Psoas muscle (tissue), 8 donors: ENCODE measurements at regions of chr10 and their contacts with region 1.

Region 1: GRCh38 chr10:122267849-122268737 is 3.0 kb upstream of the BTBD16 start:
- DNase-seq: peak in 1 of 2 donors; percentile 40
- ATAC-seq: peak; percentile 63 to 85 (median 82)
- H3K4me3 ChIP-seq: no peak overlapping the region
- H3K27ac ChIP-seq: peak overlapping the region; percentile 30
- H3K4me1 ChIP-seq: peaks cover 9% of the 10 kb centered on the region
- H3K27me3 ChIP-seq: no peaks in the 10 kb centered on the region
- CTCF ChIP-seq: peak; percentile 79

Region 2: DNA sequence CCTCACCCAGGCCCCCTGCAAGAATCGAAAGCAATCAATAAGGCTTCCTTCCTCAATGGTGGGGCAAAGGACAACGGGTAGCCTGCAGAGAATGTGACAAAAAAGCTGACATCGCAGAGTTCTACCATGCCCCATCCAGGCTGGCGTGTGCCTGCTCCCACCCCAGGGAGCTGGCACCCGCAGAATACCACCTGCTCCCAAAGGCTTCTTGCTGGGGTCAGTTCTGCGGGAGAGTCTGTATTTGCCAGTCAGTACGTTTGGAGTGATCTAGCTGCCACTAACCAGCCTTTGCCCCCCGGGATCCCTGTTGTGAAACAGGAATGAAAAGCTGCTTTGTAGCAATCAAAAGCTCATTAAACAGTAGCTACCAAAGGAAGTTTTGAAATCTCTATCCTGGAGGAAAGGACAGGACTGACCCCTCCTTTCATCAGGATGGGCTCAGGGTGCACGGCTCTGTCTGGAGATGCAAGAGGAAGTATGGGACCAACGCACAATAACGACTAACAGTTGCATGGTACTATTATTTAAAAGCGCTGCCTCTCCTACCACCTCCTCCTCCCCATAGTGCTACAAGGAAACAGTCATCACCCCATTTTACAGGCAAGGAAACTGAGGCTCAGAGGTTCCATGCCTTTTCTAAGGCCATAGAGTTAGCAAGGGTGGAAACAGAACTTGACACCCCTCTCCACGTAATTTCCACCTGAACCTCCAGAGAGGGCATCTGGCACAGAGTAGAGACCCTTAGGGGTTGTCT is 736.8 kb before region 1 on chr10:
- intact Hi-C with region 1: loop called in 1 of 2 experiments (anchors 5 kb)
- DNase-seq: no peak
- ATAC-seq: no peak
- H3K4me3 ChIP-seq: no peak overlapping the region
- H3K27ac ChIP-seq: no peak overlapping the region
- H3K4me1 ChIP-seq: no peaks in the 10 kb centered on the region
- H3K27me3 ChIP-seq: peaks cover 0 to 14% (median 2%) of the 10 kb centered on the region in 3 donors
- CTCF ChIP-seq: no peak

Region 3: DNA sequence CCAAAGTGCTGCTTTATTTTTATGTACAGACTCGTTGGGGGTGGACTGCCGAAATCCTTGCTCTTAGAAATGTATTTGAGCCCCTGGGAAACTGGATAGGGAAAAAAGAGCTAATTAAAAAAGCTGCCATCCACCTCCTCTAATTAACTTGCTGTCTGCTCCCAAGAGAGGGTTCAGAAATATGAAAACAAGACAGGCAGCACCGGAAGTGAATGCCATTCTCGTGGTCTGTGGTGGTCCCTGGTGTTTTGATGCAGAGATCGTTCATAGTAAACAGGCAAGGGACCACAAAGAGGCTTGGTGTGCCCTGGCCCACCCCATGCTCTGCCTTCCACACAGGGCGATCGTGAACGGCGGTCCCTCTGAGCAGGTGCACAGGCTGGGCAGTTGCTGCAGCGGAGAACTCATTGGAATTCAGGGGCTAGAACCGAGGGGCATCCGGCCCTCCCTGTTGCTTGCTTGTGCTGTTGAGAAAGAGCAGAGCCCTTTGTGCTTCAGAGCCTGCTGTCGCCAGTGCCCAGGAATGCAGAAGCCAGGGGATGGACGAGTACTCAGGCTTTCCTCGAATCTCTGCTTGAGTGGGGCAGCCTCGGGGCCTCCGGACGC is 76.1 kb before region 1 on chr10:
- intact Hi-C with region 1: no loop called
- DNase-seq: no peak
- ATAC-seq: peak in 3 of 4 donors; percentile 7 to 43 (median 8)
- H3K4me3 ChIP-seq: no peak overlapping the region
- H3K27ac ChIP-seq: no peak overlapping the region
- H3K4me1 ChIP-seq: peaks cover 36% of the 10 kb centered on the region
- H3K27me3 ChIP-seq: no peaks in the 10 kb centered on the region
- CTCF ChIP-seq: no peak

Region 4: DNA sequence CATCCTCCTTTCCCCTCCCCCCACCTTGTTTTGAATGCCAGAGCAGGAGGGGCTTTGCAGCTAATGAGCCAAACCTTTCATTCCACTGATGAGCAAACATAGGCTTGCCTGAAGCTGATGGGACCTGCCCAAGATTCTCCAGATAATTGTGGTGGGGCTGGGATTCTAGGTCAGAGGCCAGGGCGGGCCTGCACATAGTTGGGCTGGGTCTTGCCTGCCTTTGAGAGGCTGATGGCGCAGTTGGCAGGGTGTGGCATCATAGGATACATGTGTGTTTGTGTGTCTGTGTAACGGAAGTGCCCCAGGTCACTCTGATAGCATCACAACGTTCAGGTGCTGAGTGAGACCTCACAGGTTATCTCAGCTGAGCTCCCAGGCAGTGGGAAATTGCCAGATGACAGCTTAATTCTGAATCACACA is 25.9 kb after region 1 on chr10:
- intact Hi-C with region 1: no loop called
- DNase-seq: no peak
- ATAC-seq: no peak
- H3K4me3 ChIP-seq: no peak overlapping the region
- H3K27ac ChIP-seq: no peak overlapping the region
- H3K4me1 ChIP-seq: no peaks in the 10 kb centered on the region
- H3K27me3 ChIP-seq: peaks cover 0 to 1% (median 0%) of the 10 kb centered on the region in 3 donors
- CTCF ChIP-seq: no peak

Region 5: GRCh38 chr10:122468926-122469781 is 201.1 kb after region 1 on chr10:
- intact Hi-C with region 1: no loop called
- DNase-seq: peak in 1 of 2 donors; percentile 43
- ATAC-seq: peak; percentile 88 to 93 (median 90)
- H3K4me3 ChIP-seq: no peak overlapping the region
- H3K27ac ChIP-seq: peak overlapping the region; percentile 76
- H3K4me1 ChIP-seq: peaks cover 17% of the 10 kb centered on the region
- H3K27me3 ChIP-seq: no peaks in the 10 kb centered on the region
- CTCF ChIP-seq: no peak